ENCODE measurements at regions of chr12 and their contacts with region 1.

Region 1: GRCh38 chr12:58529897-58530741 is 390.2 kb downstream of the LRIG3 start:
- DNase-seq: no peak
- ATAC-seq: no peak

Region 2: GRCh38 chr12:57998251-57998650 is 531.9 kb before region 1 on chr12:
- intact Hi-C with region 1: no loop called
- DNase-seq: no peak
- ATAC-seq: no peak

Region 3: GRCh38 chr12:58359084-58359483 is 171.0 kb before region 1 on chr12:
- intact Hi-C with region 1: loop called in 1 of 2 experiments (anchors 10 kb)
- DNase-seq: no peak
- ATAC-seq: no peak

Region 4: DNA sequence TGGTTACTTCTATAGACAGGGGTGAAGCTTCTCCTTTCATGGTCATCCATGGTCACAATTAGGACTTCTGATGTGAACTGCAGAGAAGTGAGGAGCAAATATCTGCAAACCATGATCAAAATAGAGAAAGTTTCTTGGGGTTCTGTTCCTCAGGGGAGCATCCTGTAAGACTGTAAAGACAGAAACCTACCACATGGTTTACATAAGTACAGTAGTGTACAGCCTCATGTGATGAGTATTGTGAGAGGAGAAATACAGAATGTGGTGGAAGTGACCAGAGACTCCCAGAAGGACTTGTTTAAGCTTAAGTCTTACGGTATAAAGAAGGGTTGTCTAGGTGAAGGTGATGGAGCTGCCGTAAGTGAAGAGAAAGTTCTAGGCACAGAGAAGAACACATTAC is 94.5 kb before region 1 on chr12:
- intact Hi-C with region 1: no loop called
- DNase-seq: no peak
- ATAC-seq: no peak

Region 5: GRCh38 chr12:58583541-58584339 is 53.6 kb after region 1 on chr12:
- intact Hi-C with region 1: no loop called
- DNase-seq: no peak
- ATAC-seq: no peak

Region 6: DNA sequence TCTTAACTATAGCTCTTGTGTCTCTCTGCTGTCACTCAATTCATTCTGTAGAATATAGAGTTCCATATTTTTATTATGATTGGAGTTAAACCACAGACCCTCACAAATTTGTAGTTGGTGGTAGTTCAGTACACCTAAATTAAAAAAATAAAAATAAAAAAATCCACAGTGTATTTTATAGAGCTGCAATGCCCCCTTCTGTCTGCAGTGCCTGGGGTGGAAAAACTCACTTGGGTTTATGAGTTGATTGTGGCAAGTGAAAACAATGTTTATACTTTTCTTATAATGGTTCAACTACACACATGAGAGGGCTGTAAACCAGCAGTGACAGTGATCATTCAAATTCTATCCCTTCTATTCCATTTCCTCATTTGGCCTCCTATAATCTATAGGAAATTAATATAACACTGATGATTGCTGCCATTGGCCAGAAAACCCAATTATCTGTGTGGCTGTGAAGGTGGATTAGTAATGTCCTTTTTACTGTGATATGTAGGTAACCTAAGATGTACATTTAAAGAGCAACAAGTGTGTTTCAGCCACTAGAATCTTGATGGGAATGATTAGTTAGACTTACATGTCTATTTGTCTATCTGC is 557.1 kb after region 1 on chr12:
- intact Hi-C with region 1: loop called in 1 of 2 experiments (anchors 10 kb)
- DNase-seq: peak in 1 of 2 donors; percentile 20
- ATAC-seq: peak; percentile 86

Region 7: GRCh38 chr12:59149997-59150642 is 620.0 kb after region 1 on chr12:
- intact Hi-C with region 1: loop called in 1 of 2 experiments (anchors 10 kb)
- DNase-seq: no peak
- ATAC-seq: peak; percentile 99